ENCODE measurements at regions of chr7 and their contacts with region 1.

Region 1: DNA sequence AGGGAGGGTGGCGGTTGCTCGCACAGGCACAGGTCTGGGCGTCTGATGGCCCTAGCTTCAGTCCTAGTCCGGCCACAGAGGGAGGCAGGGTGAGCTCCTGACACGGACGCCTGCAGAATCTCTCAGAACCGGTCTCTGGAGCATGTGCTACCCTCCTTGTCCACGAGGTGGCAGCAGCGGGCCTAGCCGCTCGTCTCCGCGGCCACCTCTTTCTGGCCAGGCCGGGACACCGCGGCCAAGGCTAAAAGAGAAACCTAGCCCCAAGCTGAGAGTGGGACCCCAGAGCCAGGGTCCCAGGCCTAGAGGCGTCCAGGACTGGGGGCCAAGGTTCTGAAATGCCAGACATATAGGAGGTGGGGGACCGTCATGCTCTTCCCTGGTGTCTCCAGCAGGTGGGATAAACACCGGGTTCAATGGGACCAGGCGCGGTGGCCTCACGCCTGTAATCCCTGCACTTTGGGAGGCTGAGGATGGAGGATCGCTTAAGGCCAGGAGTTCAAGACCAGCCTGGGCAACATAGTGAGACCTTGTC is 3.2 kb upstream of the LAT2 start:
- DNase-seq: peak; percentile 94
- H3K4me3 ChIP-seq: no peak overlapping the region
- H3K27ac ChIP-seq: no peak overlapping the region
- H3K4me1 ChIP-seq: peaks cover 0 to 4% of the 10 kb centered on the region in 2 experiments; a peak in 3 of 4 replicates
- H3K27me3 ChIP-seq: no peaks in the 10 kb centered on the region
- CTCF ChIP-seq: peak; percentile 100
- EP300 ChIP-seq: no peak
- RAD21 ChIP-seq: peak; percentile 91

Region 2: GRCh38 chr7:73879977-73880681 is 326.5 kb before region 1 on chr7:
- CTCF ChIA-PET with region 1: interaction called, 11 read pairs
- POLR2A ChIA-PET with region 1: no interaction called
- DNase-seq: peak; percentile 27
- H3K4me3 ChIP-seq: no peak overlapping the region
- H3K27ac ChIP-seq: no peak overlapping the region
- H3K4me1 ChIP-seq: peaks cover 9 to 14% of the 10 kb centered on the region in 2 experiments; a peak in 3 of 4 replicates
- H3K27me3 ChIP-seq: no peaks in the 10 kb centered on the region
- CTCF ChIP-seq: no peak
- EP300 ChIP-seq: no peak
- RAD21 ChIP-seq: no peak

Region 3: GRCh38 chr7:74068393-74069085 is 138.1 kb before region 1 on chr7:
- CTCF ChIA-PET with region 1: interaction called, 54 read pairs
- POLR2A ChIA-PET with region 1: no interaction called
- DNase-seq: no peak
- H3K4me3 ChIP-seq: no peak overlapping the region
- H3K27ac ChIP-seq: no peak overlapping the region
- H3K4me1 ChIP-seq: no peaks in the 10 kb centered on the region
- H3K27me3 ChIP-seq: no peaks in the 10 kb centered on the region
- CTCF ChIP-seq: no peak
- EP300 ChIP-seq: no peak
- RAD21 ChIP-seq: no peak

Region 4: DNA sequence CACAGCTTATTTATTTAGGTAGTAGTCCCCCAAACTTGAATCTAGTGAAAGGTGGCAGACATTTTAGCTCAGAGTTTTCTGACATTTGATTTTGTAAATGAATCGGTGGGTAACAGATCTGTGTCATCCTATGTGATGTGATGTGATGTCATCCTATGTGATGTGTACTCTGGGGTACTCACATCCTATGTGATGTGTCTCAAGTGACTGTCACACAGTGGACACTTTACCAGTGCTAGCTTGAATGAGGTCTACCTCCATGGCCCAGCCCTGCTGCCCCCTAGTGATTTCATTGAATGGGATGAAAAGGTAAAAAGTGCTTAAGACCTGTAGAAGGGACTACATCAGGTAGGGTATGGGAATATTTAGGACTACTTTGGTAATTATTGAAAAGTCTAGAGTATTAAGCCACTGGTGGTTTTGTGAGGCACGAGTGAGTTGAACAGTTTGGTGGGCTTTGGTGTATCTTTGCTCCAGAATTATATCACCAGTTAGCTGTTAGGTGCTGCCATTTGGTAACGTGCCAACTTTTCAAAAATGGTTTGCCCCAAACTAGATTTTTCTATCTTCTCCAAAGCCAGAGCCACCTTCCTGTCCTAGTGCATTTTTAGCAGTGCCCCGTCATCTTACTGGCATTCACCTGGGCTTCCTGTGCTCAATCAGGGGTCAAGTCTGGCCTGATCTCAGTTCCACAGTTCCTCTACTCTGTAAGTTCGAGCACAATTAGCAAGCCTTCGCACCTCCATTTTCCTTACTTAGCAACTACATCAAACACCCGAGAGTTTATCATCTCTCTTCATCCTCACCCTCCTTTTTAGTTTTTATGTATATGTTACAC is 22.8 kb before region 1 on chr7:
- CTCF ChIA-PET with region 1: interaction called, 72 read pairs
- POLR2A ChIA-PET with region 1: no interaction called
- DNase-seq: peak; percentile 49
- H3K4me3 ChIP-seq: no peak overlapping the region
- H3K27ac ChIP-seq: no peak overlapping the region; a peak in 1 of 4 replicates
- H3K4me1 ChIP-seq: peaks cover 17 to 28% of the 10 kb centered on the region in 2 experiments; a peak in 3 of 4 replicates
- H3K27me3 ChIP-seq: no peaks in the 10 kb centered on the region
- CTCF ChIP-seq: peak; percentile 58
- EP300 ChIP-seq: no peak
- RAD21 ChIP-seq: peak; percentile 52

Region 5: DNA sequence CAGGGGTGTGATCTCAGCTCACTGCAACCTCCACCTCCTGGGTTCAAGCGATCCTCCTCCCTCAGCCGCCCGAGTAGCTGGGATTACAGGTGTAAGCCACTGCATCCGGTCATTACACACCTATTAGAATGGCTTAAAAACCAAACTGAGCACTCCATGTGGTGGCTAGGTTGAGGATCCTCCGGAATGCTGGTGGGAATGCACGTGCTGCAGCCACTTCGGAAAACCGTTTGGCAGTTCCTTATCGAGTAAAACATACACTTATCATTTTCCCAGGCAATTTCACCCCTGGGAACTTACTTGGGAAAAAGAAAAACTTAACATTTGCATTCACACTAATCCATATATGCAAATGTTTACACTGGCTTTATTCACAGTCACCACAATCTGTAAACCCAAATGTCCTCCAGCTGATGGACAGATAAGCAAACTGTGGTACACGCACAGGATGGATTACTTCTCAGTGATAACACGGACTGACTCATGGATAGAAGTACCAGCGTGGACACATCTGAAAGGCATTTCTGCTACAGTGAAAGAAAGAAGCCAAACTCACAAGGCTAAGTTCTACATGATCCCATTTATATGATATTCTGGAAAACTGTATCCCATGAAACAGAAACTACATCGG is 27.1 kb after region 1 on chr7:
- CTCF ChIA-PET with region 1: interaction called, 34 read pairs
- POLR2A ChIA-PET with region 1: no interaction called
- DNase-seq: no peak
- H3K4me3 ChIP-seq: no peak overlapping the region
- H3K27ac ChIP-seq: peak overlapping the region in 1 of 2 experiments; percentile 23; a peak in 1 of 4 replicates
- H3K4me1 ChIP-seq: no peaks in the 10 kb centered on the region
- H3K27me3 ChIP-seq: no peaks in the 10 kb centered on the region
- CTCF ChIP-seq: no peak
- EP300 ChIP-seq: no peak
- RAD21 ChIP-seq: no peak

Region 6: DNA sequence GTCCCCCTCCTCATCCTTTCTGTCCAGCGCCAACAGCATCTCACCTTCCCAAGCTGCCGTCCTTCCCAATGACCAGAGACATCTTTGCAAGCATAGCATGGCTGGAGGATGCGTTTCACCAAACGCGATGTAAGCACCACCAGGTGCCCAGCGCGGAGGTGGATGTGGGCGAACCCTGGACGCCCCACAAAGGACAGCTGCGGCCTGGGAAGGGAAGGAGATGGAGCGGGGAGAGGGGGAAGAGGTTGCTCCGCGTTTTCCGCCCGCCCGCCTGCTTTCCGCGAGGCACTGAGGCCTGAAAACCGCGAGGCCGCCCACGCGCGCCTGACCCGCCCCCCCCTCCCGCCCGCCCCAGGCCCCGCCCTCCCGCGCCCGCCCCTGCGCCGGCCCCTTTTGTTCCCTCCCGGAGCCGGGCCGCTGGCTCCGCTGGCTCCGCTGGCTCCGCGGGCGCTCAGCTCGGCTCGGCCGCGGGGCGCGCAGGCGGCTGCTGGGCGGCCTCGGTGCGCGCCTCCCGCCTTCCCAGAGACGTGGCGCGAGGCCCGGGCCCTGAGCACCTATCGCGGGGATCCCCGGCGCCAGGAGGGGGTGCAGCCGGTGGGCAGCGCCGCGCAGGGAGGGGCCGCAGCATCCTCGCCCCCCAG is 82.5 kb after region 1 on chr7 and contains the start of gene CLIP2:
- CTCF ChIA-PET with region 1: interaction called, 15 read pairs
- POLR2A ChIA-PET with region 1: no interaction called
- DNase-seq: peak; percentile 99
- H3K4me3 ChIP-seq: peak within 1 kb of the TSS; percentile 74 to 99
- H3K27ac ChIP-seq: peak within 1 kb of the TSS; percentile 65 to 68; a peak in 3 of 4 replicates
- H3K4me1 ChIP-seq: peaks cover 11 to 28% of the 10 kb centered on the region in 2 experiments; a peak in 3 of 4 replicates
- H3K27me3 ChIP-seq: no peaks in the 10 kb centered on the region
- CTCF ChIP-seq: no peak
- EP300 ChIP-seq: no peak
- RAD21 ChIP-seq: 0 out of 2 replicates have a peak, but pooled peaks have one; percentile 10
- polyA plus RNA-seq, gene CLIP2: 9.6 and 14.3 TPM in 2 replicates

Region 7: GRCh38 chr7:74412056-74412455 is 205.4 kb after region 1 on chr7:
- CTCF ChIA-PET with region 1: interaction called, 537 read pairs
- POLR2A ChIA-PET with region 1: no interaction called
- DNase-seq: no peak
- H3K4me3 ChIP-seq: no peak overlapping the region
- H3K27ac ChIP-seq: no peak overlapping the region
- H3K4me1 ChIP-seq: no peaks in the 10 kb centered on the region
- H3K27me3 ChIP-seq: no peaks in the 10 kb centered on the region
- CTCF ChIP-seq: no peak
- EP300 ChIP-seq: no peak
- RAD21 ChIP-seq: no peak

Region 8: GRCh38 chr7:74709880-74710671 is 503.4 kb after region 1 on chr7:
- CTCF ChIA-PET with region 1: no interaction called
- POLR2A ChIA-PET with region 1: no interaction called
- DNase-seq: no peak
- H3K4me3 ChIP-seq: no peak overlapping the region
- H3K27ac ChIP-seq: no peak overlapping the region
- H3K4me1 ChIP-seq: no peaks in the 10 kb centered on the region
- H3K27me3 ChIP-seq: no peaks in the 10 kb centered on the region
- CTCF ChIP-seq: peak; percentile 31; the same call in 1 of the 2 replicates
- EP300 ChIP-seq: no peak
- RAD21 ChIP-seq: no peak